CD8-positive, alpha-beta memory T cell (primary cell): ENCODE measurements at regions of chr3 and their contacts with region 1.

Region 1: GRCh38 chr3:27685474-27685873 is 36.6 kb downstream of the EOMES start:
- DNase-seq: no peak
- H3K4me3 ChIP-seq: no peak overlapping the region
- H3K4me3 Mint-ChIP-seq: no peak overlapping the region
- H3K27ac ChIP-seq: no peak overlapping the region
- H3K27ac Mint-ChIP-seq: no peak overlapping the region
- H3K4me1 ChIP-seq: peaks cover 4% of the 10 kb centered on the region
- H3K4me1 Mint-ChIP-seq: peaks cover 8 to 11% (median 10%) of the 10 kb centered on the region in 3 donors
- H3K27me3 ChIP-seq: no peaks in the 10 kb centered on the region
- H3K27me3 Mint-ChIP-seq: peaks cover 2 to 4% of the 10 kb centered on the region in 2 donors

Region 2: DNA sequence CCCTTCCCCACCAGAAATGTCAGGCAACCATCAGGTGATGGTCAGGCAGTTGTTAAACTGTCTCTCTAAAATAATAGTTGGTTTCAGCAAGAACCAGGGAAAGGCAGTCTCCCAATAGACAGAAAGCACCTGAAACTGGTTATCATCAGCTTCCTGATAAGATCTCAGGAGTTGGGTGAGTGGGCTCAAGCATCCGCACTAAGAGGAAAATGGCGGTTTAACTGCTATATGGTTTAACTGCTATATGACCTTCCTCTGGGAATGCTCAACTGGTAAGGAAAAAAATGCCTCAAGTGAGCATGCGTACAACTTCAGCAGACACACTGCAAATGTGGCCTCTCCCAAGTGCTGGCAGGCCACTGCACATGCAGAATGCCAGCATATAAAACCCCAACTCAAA is 315.1 kb after region 1 on chr3:
- CTCF ChIA-PET with region 1: no interaction called
- POLR2A ChIA-PET with region 1: interaction called, 12 read pairs
- DNase-seq: no peak
- H3K4me3 ChIP-seq: no peak overlapping the region
- H3K4me3 Mint-ChIP-seq: no peak overlapping the region
- H3K27ac ChIP-seq: no peak overlapping the region
- H3K27ac Mint-ChIP-seq: peak overlapping the region in 1 of 8 donors; percentile 4
- H3K4me1 ChIP-seq: no peaks in the 10 kb centered on the region
- H3K4me1 Mint-ChIP-seq: no peaks in the 10 kb centered on the region
- H3K27me3 ChIP-seq: no peaks in the 10 kb centered on the region
- H3K27me3 Mint-ChIP-seq: peaks cover 0 to 2% of the 10 kb centered on the region in 2 donors